ENCODE measurements at regions of chr15 and their contacts with region 1.

Region 1: DNA sequence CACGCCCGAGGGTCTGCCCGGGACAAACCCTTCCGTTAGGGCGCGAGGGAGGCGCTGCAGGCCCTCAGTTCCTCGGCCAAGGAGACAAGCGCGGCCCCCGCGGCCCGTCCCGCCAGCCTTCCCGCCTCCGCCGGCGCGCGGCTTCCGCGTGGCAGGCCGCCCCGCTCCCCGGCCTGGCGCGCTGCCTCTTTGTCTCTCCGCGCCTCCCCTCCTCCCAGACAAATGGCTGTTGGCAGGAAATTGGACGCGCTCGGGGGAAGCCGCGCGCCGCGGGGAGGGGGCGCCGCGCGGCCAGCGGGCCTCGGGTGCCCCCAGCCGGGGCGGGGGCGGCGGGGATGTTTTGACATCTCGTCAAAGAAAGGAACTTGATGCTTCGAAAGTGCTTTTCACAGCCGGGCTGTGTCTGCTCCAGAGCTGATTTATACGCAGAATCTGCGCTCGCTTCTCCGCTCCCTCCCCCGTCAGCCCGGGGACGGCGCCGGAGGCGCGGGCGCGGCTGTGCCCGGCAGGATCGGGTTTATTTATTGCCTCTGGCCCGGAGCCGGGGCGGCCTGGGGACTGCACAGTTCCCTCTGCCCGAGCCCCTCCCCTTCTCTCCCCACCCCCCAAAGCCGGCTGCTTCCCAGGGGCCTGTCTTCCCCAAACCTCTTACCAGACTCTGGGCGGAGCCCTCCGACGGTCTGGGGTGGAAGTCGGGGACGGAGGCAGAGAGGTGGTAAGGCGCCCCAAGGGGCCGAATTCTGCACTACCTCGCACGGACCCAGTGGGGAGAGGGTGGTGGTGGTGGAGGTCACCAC is 20.7 kb downstream of the SHF start:
- DNase-seq: peak; percentile 89
- H3K4me3 ChIP-seq: peak overlapping the region; percentile 47 to 78 (median 58)
- H3K27ac ChIP-seq: peak overlapping the region; percentile 94 to 99 (median 96)
- H3K4me1 ChIP-seq: peaks cover 10 to 21% (median 12%) of the 10 kb centered on the region in 4 donors
- H3K27me3 ChIP-seq: no peaks in the 10 kb centered on the region
- CTCF ChIP-seq: peak; percentile 68 to 89 (median 74)
- EP300 ChIP-seq: no peak
- POLR2A ChIP-seq: peak; percentile 67

Region 2: DNA sequence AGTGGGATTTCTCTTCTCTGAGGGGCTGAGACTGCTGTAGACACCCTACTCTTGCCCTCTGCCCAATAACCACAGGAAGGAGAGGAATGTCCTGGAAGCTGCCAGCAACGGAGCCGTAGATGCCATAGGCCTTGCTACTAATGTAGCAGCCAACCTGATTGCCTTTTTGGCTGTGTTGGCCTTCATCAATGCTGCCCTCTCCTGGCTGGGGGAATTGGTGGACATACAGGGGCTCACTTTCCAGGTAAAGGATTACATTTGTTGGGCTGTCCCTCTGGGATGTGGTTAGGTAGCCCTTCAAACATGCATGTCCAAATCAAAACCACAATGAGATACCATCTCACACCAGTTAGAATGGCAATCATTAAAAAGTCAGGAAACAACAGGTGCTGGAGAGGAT is 101.1 kb after region 1 on chr15:
- in situ Hi-C with region 1: no loop called
- intact Hi-C with region 1: no loop called
- DNase-seq: peak; percentile 54
- H3K4me3 ChIP-seq: no peak overlapping the region
- H3K27ac ChIP-seq: no peak overlapping the region
- H3K4me1 ChIP-seq: no peaks in the 10 kb centered on the region
- H3K27me3 ChIP-seq: no peaks in the 10 kb centered on the region
- CTCF ChIP-seq: peak; percentile 8 to 46 (median 19)
- EP300 ChIP-seq: no peak
- POLR2A ChIP-seq: no peak

Region 3: GRCh38 chr15:45378149-45378912 is 211.3 kb after region 1 on chr15 and contains the start of gene GATM:
- in situ Hi-C with region 1: loop called in 1 of 4 experiments (anchors 25 kb)
- intact Hi-C with region 1: no loop called
- DNase-seq: peak; percentile 79
- H3K4me3 ChIP-seq: peak within 1 kb of the TSS; percentile 51 to 73 (median 60)
- H3K27ac ChIP-seq: peak within 1 kb of the TSS; percentile 83 to 92 (median 84)
- H3K4me1 ChIP-seq: peaks cover 0 to 28% (median 13%) of the 10 kb centered on the region in 4 donors
- H3K27me3 ChIP-seq: no peaks in the 10 kb centered on the region
- CTCF ChIP-seq: peak; percentile 33 to 66 (median 52)
- EP300 ChIP-seq: no peak
- POLR2A ChIP-seq: peak; percentile 43
- total RNA-seq, gene GATM: 15.9 to 96.9 (median 18.6) TPM

Region 4: GRCh38 chr15:45611305-45611704 is 444.3 kb after region 1 on chr15:
- in situ Hi-C with region 1: loop called in 2 of 4 experiments (anchors 25 kb)
- intact Hi-C with region 1: no loop called
- DNase-seq: no peak
- H3K4me3 ChIP-seq: no peak overlapping the region
- H3K27ac ChIP-seq: no peak overlapping the region
- H3K4me1 ChIP-seq: no peaks in the 10 kb centered on the region
- H3K27me3 ChIP-seq: no peaks in the 10 kb centered on the region
- CTCF ChIP-seq: peak in 4 of 5 experiments; percentile 27 to 38 (median 33)
- EP300 ChIP-seq: no peak
- POLR2A ChIP-seq: no peak